ENCODE measurements at regions of chr19 and their contacts with region 1.

Region 1: DNA sequence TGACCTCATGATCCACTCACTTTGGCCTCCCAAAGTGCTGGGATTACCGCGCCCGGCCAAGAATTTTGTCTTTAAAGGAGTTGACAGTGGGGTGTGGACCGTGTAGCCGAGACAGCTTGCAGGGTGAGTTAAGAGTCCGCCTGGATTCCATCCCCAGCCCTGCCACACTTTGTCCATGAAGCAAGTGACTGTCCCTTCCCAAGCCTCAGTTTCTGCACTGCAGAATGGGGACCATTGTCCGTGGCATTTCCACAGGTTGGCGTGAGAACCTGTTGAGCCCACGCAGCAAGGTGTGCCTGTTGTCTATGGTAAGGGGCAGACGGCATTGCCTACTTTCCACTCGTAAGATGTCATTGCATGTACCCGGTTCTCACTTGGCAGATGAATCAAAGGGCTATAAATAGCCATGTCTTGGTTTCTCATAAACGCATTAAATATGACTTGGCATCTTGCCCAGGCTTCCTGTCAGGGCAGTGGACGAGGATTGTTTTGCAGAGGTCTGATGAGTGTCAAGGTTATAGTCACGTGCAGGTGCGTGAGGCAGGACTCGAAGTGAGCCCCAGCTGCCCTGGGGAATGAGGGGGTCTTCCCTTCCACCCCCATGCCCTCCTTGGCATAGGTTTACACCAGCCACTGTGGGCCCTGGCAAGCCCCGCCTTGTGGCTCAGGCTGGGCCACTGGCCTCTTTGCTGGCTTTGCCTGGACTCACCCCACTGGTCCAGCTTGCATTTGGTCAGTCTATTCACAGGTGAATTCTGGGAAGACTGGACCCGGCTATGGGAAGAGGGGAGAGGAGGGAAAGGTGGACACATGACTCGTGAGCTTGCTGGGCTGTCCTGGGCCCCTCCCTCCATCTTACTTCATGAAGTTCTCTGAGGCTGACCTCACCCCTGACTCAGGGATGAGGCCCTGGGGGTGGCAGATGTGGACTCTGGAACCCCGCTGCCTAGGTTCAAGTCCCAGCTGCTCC is 14.6 kb downstream of the FAM187B start:
- DNase-seq: peak; percentile 86
- H3K4me3 Mint-ChIP-seq: peak overlapping the region; percentile 39
- H3K27ac Mint-ChIP-seq: peak overlapping the region; percentile 75
- H3K4me1 Mint-ChIP-seq: peaks cover 22% of the 10 kb centered on the region
- H3K27me3 Mint-ChIP-seq: no peaks in the 10 kb centered on the region
- CTCF ChIP-seq: no peak

Region 2: GRCh38 chr19:35162471-35163326 is 51.2 kb before region 1 on chr19:
- CTCF ChIA-PET with region 1: no interaction called
- intact Hi-C with region 1: loop called (anchors 5 kb)
- DNase-seq: peak; percentile 88
- H3K4me3 Mint-ChIP-seq: peak overlapping the region; percentile 62
- H3K27ac Mint-ChIP-seq: peak overlapping the region; percentile 90
- H3K4me1 Mint-ChIP-seq: peaks cover 78% of the 10 kb centered on the region
- H3K27me3 Mint-ChIP-seq: no peaks in the 10 kb centered on the region
- CTCF ChIP-seq: no peak

Region 3: GRCh38 chr19:35247526-35248306 is 33.8 kb after region 1 on chr19:
- CTCF ChIA-PET with region 1: no interaction called
- intact Hi-C with region 1: loop called (anchors 2 kb)
- DNase-seq: peak; percentile 97
- H3K4me3 Mint-ChIP-seq: peak overlapping the region; percentile 100
- H3K27ac Mint-ChIP-seq: peak overlapping the region; percentile 96
- H3K4me1 Mint-ChIP-seq: peaks cover 42% of the 10 kb centered on the region
- H3K27me3 Mint-ChIP-seq: no peaks in the 10 kb centered on the region
- CTCF ChIP-seq: peak; percentile 50

Measured in Calu3 (cell line).